CD4-positive, alpha-beta memory T cell (primary cell): ENCODE measurements at regions of chr4 and their contacts with region 1.

Region 1: DNA sequence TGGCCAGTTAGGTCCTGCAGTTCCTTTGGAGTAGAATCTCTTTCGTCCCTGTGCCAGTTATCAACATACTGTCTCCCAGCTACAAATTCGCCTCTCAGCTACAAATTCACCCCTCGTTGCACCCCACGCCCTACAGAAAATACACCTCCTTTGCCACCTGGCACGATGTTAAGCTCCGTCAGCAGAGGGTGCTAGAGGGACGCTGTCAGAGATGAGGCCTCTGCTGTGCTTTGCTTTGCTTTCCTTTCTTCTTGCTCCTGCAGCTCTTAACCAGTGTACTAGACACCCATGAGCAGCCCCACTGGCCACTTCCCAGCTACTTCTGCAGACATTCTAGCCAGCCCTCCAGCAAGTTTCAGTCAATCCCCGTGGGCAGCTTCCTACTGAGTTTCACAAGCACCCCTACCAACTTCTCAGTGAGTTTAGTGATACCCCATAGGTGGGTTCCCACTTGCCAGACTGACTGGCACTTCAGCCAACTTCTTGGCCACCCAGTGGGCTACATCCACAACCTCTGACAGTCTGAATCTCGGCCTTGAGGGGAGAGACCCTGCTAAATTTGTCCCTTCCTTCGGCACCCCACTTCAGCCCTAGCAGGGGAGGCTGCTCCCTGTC is 21.8 kb downstream of the HAUS3 start:
- DNase-seq: peak; percentile 75 to 81 (median 76)
- H3K4me3 ChIP-seq: no peak overlapping the region
- H3K4me3 Mint-ChIP-seq: no peak overlapping the region
- H3K27ac ChIP-seq: no peak overlapping the region
- H3K27ac Mint-ChIP-seq: peak overlapping the region in 5 of 7 donors; percentile 2 to 81 (median 43)
- H3K4me1 ChIP-seq: no peaks in the 10 kb centered on the region
- H3K4me1 Mint-ChIP-seq: peaks cover 4 to 7% (median 6%) of the 10 kb centered on the region in 4 donors
- H3K27me3 ChIP-seq: no peaks in the 10 kb centered on the region
- H3K27me3 Mint-ChIP-seq: no peaks in the 10 kb centered on the region

Region 2: GRCh38 chr4:2231082-2231481 is 11.0 kb after region 1 on chr4:
- CTCF ChIA-PET with region 1: interaction called, 14 read pairs
- POLR2A ChIA-PET with region 1: no interaction called
- intact Hi-C with region 1: no loop called
- DNase-seq: no peak
- H3K4me3 ChIP-seq: no peak overlapping the region
- H3K4me3 Mint-ChIP-seq: no peak overlapping the region
- H3K27ac ChIP-seq: no peak overlapping the region
- H3K27ac Mint-ChIP-seq: peak overlapping the region in 1 of 7 donors; percentile 37
- H3K4me1 ChIP-seq: no peaks in the 10 kb centered on the region
- H3K4me1 Mint-ChIP-seq: peaks cover 10 to 35% (median 23%) of the 10 kb centered on the region in 4 donors
- H3K27me3 ChIP-seq: no peaks in the 10 kb centered on the region
- H3K27me3 Mint-ChIP-seq: no peaks in the 10 kb centered on the region

Region 3: GRCh38 chr4:2354118-2354517 is 134.0 kb after region 1 on chr4:
- CTCF ChIA-PET with region 1: interaction called, 12 read pairs
- POLR2A ChIA-PET with region 1: no interaction called
- intact Hi-C with region 1: loop called (anchors 1 kb)
- DNase-seq: peak in 3 of 5 donors; percentile 11 to 13 (median 11)
- H3K4me3 ChIP-seq: no peak overlapping the region
- H3K4me3 Mint-ChIP-seq: no peak overlapping the region
- H3K27ac ChIP-seq: no peak overlapping the region
- H3K27ac Mint-ChIP-seq: no peak overlapping the region
- H3K4me1 ChIP-seq: no peaks in the 10 kb centered on the region
- H3K4me1 Mint-ChIP-seq: peaks cover 0 to 16% (median 6%) of the 10 kb centered on the region in 4 donors
- H3K27me3 ChIP-seq: no peaks in the 10 kb centered on the region
- H3K27me3 Mint-ChIP-seq: no peaks in the 10 kb centered on the region

Region 4: GRCh38 chr4:2418650-2419571 is 198.8 kb after region 1 on chr4 and contains the start of gene CFAP99:
- CTCF ChIA-PET with region 1: interaction called, 17 read pairs
- POLR2A ChIA-PET with region 1: interaction called, 7 read pairs
- intact Hi-C with region 1: loop called (anchors 1 kb)
- DNase-seq: peak; percentile 96 to 99 (median 97)
- H3K4me3 ChIP-seq: peak within 1 kb of the TSS; percentile 44 to 72
- H3K4me3 Mint-ChIP-seq: peak within 1 kb of the TSS; percentile 89 to 95 (median 92)
- H3K27ac ChIP-seq: peak within 1 kb of the TSS; percentile 78
- H3K27ac Mint-ChIP-seq: peak within 1 kb of the TSS; percentile 92 to 100 (median 98)
- H3K4me1 ChIP-seq: peaks cover 39% of the 10 kb centered on the region
- H3K4me1 Mint-ChIP-seq: peaks cover 29 to 48% (median 36%) of the 10 kb centered on the region in 4 donors
- H3K27me3 ChIP-seq: no peaks in the 10 kb centered on the region
- H3K27me3 Mint-ChIP-seq: no peaks in the 10 kb centered on the region
- total RNA-seq, gene CFAP99: 0.12 to 0.19 TPM

Region 5: GRCh38 chr4:2428496-2429213 is 208.5 kb after region 1 on chr4:
- CTCF ChIA-PET with region 1: interaction called, 10 read pairs
- POLR2A ChIA-PET with region 1: no interaction called
- intact Hi-C with region 1: no loop called
- DNase-seq: no peak
- H3K4me3 ChIP-seq: no peak overlapping the region
- H3K4me3 Mint-ChIP-seq: no peak overlapping the region
- H3K27ac ChIP-seq: no peak overlapping the region
- H3K27ac Mint-ChIP-seq: peak overlapping the region in 1 of 7 donors; percentile 64
- H3K4me1 ChIP-seq: no peaks in the 10 kb centered on the region
- H3K4me1 Mint-ChIP-seq: peaks cover 0 to 5% (median 0%) of the 10 kb centered on the region in 4 donors
- H3K27me3 ChIP-seq: no peaks in the 10 kb centered on the region
- H3K27me3 Mint-ChIP-seq: peaks cover 4 to 9% of the 10 kb centered on the region in 2 donors

Region 6: GRCh38 chr4:2441393-2442174 is 221.5 kb after region 1 on chr4:
- CTCF ChIA-PET with region 1: interaction called, 84 read pairs
- POLR2A ChIA-PET with region 1: interaction called, 4 read pairs
- intact Hi-C with region 1: loop called (anchors 1 kb)
- DNase-seq: peak; percentile 63 to 78 (median 69)
- H3K4me3 ChIP-seq: no peak overlapping the region
- H3K4me3 Mint-ChIP-seq: peak overlapping the region in 1 of 8 donors; percentile 43
- H3K27ac ChIP-seq: no peak overlapping the region
- H3K27ac Mint-ChIP-seq: peak overlapping the region in 1 of 7 donors; percentile 82
- H3K4me1 ChIP-seq: peaks cover 6% of the 10 kb centered on the region
- H3K4me1 Mint-ChIP-seq: peaks cover 0 to 5% (median 2%) of the 10 kb centered on the region in 4 donors
- H3K27me3 ChIP-seq: no peaks in the 10 kb centered on the region
- H3K27me3 Mint-ChIP-seq: no peaks in the 10 kb centered on the region

Region 7: DNA sequence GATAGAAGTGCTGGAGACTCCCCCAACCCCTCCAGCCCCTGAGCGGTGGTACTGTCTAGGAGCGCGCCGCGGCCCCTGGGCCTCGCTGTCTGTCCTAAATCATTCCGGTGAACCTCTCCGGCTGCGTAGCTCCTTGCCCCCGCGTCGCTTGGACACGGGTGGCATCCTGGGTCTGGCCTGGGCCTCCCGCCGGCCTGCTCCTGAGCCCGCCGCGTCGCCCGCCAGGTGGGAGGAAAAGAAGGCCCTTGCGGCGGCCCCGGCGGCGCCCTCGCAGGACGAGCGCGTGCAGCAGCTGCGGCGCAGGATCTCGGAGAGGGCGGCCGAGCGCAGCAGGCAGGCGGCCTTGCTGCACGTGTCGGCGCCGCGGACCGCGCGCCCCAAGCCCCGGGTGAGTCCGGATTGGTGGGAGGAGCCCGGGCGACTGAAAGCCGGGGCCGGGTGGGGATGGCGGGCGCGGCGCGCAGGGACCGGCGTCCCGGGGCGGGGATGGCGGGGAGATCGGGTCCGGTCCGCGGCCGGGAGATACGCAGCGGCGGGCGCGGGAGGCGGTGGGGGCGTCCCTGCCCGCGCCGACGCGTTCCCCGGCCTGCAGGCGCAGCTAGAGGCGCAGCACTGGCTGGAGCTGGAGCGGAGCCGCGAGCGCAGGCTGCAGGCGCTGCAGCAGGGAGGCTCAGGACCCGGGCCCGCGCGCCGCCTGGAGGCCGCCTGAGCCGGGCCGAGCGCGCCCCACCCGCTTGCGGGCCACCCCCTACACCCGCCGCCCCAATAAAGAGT is 242.3 kb after region 1 on chr4:
- CTCF ChIA-PET with region 1: interaction called, 49 read pairs
- POLR2A ChIA-PET with region 1: interaction called, 5 read pairs
- intact Hi-C with region 1: loop called (anchors 1 kb)
- DNase-seq: peak; percentile 64 to 73 (median 71)
- H3K4me3 ChIP-seq: peak overlapping the region in 1 of 2 donors; percentile 46
- H3K4me3 Mint-ChIP-seq: peak overlapping the region; percentile 60 to 82 (median 80)
- H3K27ac ChIP-seq: no peak overlapping the region
- H3K27ac Mint-ChIP-seq: peak overlapping the region in 1 of 7 donors; percentile 62
- H3K4me1 ChIP-seq: peaks cover 16% of the 10 kb centered on the region
- H3K4me1 Mint-ChIP-seq: peaks cover 6 to 16% (median 6%) of the 10 kb centered on the region in 4 donors
- H3K27me3 ChIP-seq: no peaks in the 10 kb centered on the region
- H3K27me3 Mint-ChIP-seq: no peaks in the 10 kb centered on the region